ENCODE measurements at regions of chr3 and their contacts with region 1.

Region 1: GRCh38 chr3:125916376-125916978 is 52.5 kb upstream of the ROPN1B start:
- DNase-seq: peak; percentile 98
- H3K4me3 Mint-ChIP-seq: peak overlapping the region; percentile 84
- H3K27ac Mint-ChIP-seq: peak overlapping the region; percentile 78
- H3K4me1 Mint-ChIP-seq: peaks cover 31% of the 10 kb centered on the region
- H3K27me3 Mint-ChIP-seq: no peaks in the 10 kb centered on the region

Region 2: GRCh38 chr3:125055913-125056745 is 860.3 kb before region 1 on chr3 and contains the start of gene HEG1:
- CTCF ChIA-PET with region 1: no interaction called
- intact Hi-C with region 1: loop called (anchors 5 kb)
- DNase-seq: peak; percentile 78
- H3K4me3 Mint-ChIP-seq: peak within 1 kb of the TSS; percentile 80
- H3K27ac Mint-ChIP-seq: peak within 1 kb of the TSS; percentile 11
- H3K4me1 Mint-ChIP-seq: peaks cover 44% of the 10 kb centered on the region
- H3K27me3 Mint-ChIP-seq: no peaks in the 10 kb centered on the region
- total RNA-seq, gene HEG1: 5.8 TPM

Region 3: GRCh38 chr3:125582711-125583110 is 333.8 kb before region 1 on chr3:
- CTCF ChIA-PET with region 1: no interaction called
- intact Hi-C with region 1: no loop called
- DNase-seq: peak; percentile 24
- H3K4me3 Mint-ChIP-seq: no peak overlapping the region
- H3K27ac Mint-ChIP-seq: no peak overlapping the region
- H3K4me1 Mint-ChIP-seq: peaks cover 10% of the 10 kb centered on the region
- H3K27me3 Mint-ChIP-seq: no peaks in the 10 kb centered on the region

Region 4: DNA sequence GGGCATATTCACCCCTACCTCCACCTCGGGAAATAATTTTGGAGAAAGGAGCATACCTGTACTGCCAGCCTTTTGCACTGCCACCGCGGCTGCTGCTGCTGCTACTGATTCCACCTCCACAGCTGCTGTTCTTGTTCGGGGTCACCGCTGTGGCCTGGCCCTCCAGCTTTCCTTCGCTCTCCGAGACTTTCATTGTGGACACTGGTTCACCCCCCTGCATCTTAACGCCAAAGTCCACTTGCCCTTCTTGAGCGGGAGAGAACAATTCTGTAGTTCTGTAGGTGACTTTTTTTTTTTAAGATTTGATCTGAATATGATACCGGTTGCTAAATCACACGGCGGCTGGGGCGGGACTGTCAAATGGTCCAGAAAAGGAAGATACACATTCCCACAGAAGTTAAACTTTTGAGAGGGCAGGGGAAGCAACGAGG is 321.9 kb before region 1 on chr3:
- CTCF ChIA-PET with region 1: no interaction called
- intact Hi-C with region 1: loop called (anchors 2 kb)
- DNase-seq: peak; percentile 14
- H3K4me3 Mint-ChIP-seq: peak overlapping the region; percentile 99
- H3K27ac Mint-ChIP-seq: peak overlapping the region; percentile 88
- H3K4me1 Mint-ChIP-seq: peaks cover 38% of the 10 kb centered on the region
- H3K27me3 Mint-ChIP-seq: no peaks in the 10 kb centered on the region

Region 5: DNA sequence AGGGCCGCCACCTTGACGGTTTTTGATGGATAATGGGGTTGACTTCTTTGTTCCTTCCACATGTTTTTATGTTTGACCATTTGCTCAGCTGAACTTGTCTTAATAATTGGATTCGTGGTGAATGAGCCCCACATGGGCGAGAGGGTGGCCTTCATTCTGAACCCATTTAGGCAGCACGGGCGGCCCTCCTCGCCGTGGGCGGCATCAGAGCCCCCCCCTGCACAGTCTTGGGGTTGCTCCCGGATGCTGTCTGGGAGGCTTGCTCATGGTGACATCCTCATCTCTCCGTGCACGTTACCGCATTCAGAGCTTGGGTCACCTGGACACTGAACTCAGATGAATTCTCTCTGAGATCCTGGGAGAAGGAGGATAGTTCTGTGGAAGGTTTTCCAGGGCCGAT is 148.8 kb before region 1 on chr3:
- CTCF ChIA-PET with region 1: interaction called, 3 read pairs
- intact Hi-C with region 1: loop called (anchors 1 kb)
- DNase-seq: no peak
- H3K4me3 Mint-ChIP-seq: peak overlapping the region; percentile 58
- H3K27ac Mint-ChIP-seq: no peak overlapping the region
- H3K4me1 Mint-ChIP-seq: no peaks in the 10 kb centered on the region
- H3K27me3 Mint-ChIP-seq: peaks cover 26% of the 10 kb centered on the region

Region 6: GRCh38 chr3:125990253-125990970 is 73.9 kb after region 1 on chr3:
- CTCF ChIA-PET with region 1: no interaction called
- intact Hi-C with region 1: loop called (anchors 2 kb)
- DNase-seq: peak; percentile 71
- H3K4me3 Mint-ChIP-seq: peak overlapping the region; percentile 93
- H3K27ac Mint-ChIP-seq: peak overlapping the region; percentile 91
- H3K4me1 Mint-ChIP-seq: peaks cover 3% of the 10 kb centered on the region
- H3K27me3 Mint-ChIP-seq: peaks cover 9% of the 10 kb centered on the region

Region 7: GRCh38 chr3:126357295-126358037 is 441.0 kb after region 1 on chr3 and contains the start of gene KLF15:
- CTCF ChIA-PET with region 1: no interaction called
- intact Hi-C with region 1: loop called (anchors 1 kb)
- DNase-seq: peak; percentile 76
- H3K4me3 Mint-ChIP-seq: peak within 1 kb of the TSS; percentile 82
- H3K27ac Mint-ChIP-seq: peak within 1 kb of the TSS; percentile 65
- H3K4me1 Mint-ChIP-seq: peaks cover 10% of the 10 kb centered on the region
- H3K27me3 Mint-ChIP-seq: peaks cover 41% of the 10 kb centered on the region
- total RNA-seq, gene KLF15: 0.62 to 0.89 TPM

Region 8: GRCh38 chr3:127590593-127591477 is 1674.4 kb after region 1 on chr3 and contains the start of gene TPRA1:
- CTCF ChIA-PET with region 1: no interaction called
- intact Hi-C with region 1: loop called (anchors 10 kb)
- DNase-seq: peak; percentile 84
- H3K4me3 Mint-ChIP-seq: peak within 1 kb of the TSS; percentile 93
- H3K27ac Mint-ChIP-seq: peak within 1 kb of the TSS; percentile 92
- H3K4me1 Mint-ChIP-seq: peaks cover 32% of the 10 kb centered on the region
- H3K27me3 Mint-ChIP-seq: no peaks in the 10 kb centered on the region
- total RNA-seq, gene TPRA1: 15.1 to 15.9 TPM

Measured in activated naive CD4-positive, alpha-beta T cell treated with anti-CD3 and anti-CD28 coated beads for 36 hours (primary cell).